Head of caudate nucleus (tissue), 42 donors: ENCODE measurements at regions of chr1 and their contacts with region 1.

Region 1: GRCh38 chr1:32111789-32112188 is 3.9 kb downstream of the KPNA6 start:
- DNase-seq: no peak

Region 2: GRCh38 chr1:31970873-31971272 is 140.9 kb before region 1 on chr1:
- intact Hi-C with region 1: no loop called
- DNase-seq: no peak

Region 3: GRCh38 chr1:32100807-32101697 is 10.7 kb before region 1 on chr1:
- intact Hi-C with region 1: no loop called
- DNase-seq: no peak

Region 4: GRCh38 chr1:32179443-32180185 is 67.8 kb after region 1 on chr1 and contains the start of gene TXLNA:
- intact Hi-C with region 1: loop called (anchors 5 kb)
- DNase-seq: peak; percentile 82 to 98 (median 95)

Region 5: GRCh38 chr1:32886004-32886827 is 774.4 kb after region 1 on chr1 and contains the start of gene HPCA:
- intact Hi-C with region 1: no loop called
- DNase-seq: peak in 26 of 42 donors; percentile 43 to 81 (median 66)